AG04449 (cell line): ENCODE measurements at regions of chr15 and their contacts with region 1.

Region 1: DNA sequence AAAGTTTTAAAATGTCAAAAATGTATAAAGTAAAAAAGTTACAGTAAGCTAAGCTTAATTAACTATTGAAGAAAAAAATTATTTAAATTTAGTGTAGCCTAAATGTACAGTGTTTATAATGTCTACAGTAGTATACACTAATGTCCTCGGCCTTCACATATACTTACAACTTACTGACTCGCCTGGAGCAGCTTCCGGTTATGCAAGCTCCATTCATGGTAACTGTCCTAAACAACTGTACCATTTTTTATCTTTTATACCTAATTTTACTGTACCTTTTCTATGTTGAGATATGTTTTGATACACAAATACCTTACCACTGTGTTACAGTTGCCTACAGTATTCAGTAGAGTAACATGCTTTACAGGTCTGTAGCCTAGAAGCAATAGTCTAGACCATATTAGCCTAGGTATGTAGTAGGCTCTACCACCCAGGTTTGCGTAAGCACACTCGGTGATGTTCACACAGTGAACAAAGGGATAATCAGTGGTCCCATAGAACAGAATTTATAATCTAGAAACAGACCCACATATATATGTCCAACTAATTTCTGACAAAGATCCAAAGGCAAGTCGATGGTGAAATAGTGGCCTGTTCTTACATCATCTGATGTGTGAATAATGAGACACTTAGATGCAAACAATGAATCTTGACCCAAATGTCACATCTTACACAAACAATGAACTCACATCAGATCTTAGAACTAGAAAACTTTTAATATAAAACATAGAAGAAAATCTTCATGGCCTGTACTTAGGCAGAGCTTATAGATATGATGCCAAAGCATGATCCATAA is 17.4 kb upstream of the TM2D3 start:
- DNase-seq: no peak
- H3K4me3 ChIP-seq: no peak overlapping the region
- CTCF ChIP-seq: no peak

Region 2: DNA sequence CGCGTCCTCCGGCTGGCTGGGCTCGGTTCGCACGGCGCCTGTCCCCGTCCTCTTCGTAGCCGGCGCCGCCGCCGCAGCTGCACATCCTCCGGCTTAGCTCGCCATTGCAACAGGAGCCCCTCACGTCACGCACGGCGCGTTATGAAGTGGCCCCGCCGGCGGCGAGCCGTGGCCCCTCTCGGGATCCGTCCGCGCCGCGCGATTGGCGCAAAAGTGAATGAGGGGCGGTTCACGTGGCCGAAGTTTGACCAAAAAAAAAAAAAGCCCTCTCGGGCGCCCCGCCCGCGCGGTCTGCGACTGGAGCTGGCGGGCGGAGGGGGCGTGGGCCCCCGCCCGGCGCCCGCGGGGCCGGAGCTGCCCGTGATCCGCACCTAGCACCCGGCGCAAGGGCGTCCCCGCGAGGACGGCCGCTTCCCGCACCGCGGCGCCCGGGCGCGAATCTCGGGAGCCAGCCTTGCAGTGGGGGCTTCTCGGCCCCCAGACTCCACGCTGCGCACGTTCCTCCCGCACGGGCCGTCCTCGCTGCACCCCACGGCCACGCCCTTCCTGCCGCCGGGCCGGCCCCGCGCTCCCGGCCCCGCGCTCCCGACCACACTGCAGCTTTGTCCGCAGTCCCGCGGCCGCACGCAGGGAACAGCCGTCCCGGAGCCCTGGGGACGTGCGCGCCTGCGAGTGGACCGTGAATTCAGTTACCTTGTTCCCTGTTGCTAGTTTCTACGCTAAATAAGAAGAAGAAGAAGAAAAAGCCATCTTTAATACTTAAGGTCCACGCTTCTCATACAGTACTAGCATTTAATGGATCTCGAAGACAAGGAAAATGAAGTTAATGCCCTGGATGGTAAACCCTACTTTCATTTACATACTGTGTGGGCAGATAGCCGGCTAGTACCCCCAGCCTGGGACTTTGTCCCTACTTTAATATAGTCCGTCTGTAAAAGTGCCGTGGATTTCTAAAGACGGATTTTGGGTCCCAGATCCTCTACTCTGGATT is 417.4 kb before region 1 on chr15 and contains the start of gene CHSY1:
- CTCF ChIA-PET with region 1: no interaction called
- POLR2A ChIA-PET with region 1: no interaction called
- DNase-seq: peak; percentile 46
- H3K4me3 ChIP-seq: peak within 1 kb of the TSS; percentile 72
- CTCF ChIP-seq: peak; percentile 18

Region 3: GRCh38 chr15:101652098-101652782 is 17.3 kb before region 1 on chr15 and contains the start of gene TM2D3:
- CTCF ChIA-PET with region 1: interaction called, 10 read pairs
- POLR2A ChIA-PET with region 1: no interaction called
- DNase-seq: no peak
- H3K4me3 ChIP-seq: peak within 1 kb of the TSS; percentile 93
- CTCF ChIP-seq: peak; percentile 88